ENCODE measurements at regions of chr16 and their contacts with region 1.

Region 1: DNA sequence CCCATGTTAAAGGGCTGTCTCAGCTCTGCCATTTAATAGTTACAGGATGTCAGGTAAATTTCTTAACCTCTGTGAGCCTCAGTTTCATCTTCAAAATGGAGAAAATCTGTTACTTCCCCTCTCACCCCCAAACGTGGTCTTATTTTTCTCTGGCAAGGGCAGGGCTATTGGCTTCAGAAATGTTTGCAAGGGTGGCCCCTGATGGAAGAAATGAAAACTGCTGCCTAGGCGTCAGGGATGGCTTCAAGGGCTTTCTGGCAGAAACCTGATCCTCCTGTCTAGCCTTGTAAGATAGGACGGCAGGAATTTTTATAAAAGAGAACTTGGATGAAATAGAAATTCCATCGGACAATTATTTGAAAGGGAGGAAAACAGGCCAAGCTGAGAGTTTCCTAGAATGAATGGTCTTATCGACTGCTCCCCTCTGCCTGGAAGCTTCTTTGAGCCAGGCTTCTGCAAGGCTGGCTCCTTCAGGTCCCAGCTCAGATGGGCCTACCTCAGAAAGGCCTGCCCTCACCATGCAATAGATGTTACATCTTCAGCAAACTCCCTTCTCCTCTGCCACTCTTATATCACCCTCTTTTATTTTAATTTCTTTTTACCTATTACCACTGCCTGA is 43.0 kb upstream of the TANGO6 start:
- DNase-seq: peak in 7 of 9 experiments; percentile 6 to 61 (median 41)
- ATAC-seq: peak; percentile 62
- H3K4me3 ChIP-seq: no peak overlapping the region
- H3K4me3 Mint-ChIP-seq: no peak overlapping the region
- H3K27ac ChIP-seq: no peak overlapping the region
- H3K27ac Mint-ChIP-seq: no peak overlapping the region
- H3K4me1 ChIP-seq: no peaks in the 10 kb centered on the region
- H3K4me1 Mint-ChIP-seq: no peaks in the 10 kb centered on the region
- H3K27me3 ChIP-seq: no peaks in the 10 kb centered on the region
- H3K27me3 Mint-ChIP-seq: no peaks in the 10 kb centered on the region
- CTCF ChIP-seq: peak; percentile 29

Region 2: GRCh38 chr16:68704232-68704867 is 96.0 kb before region 1 on chr16:
- CTCF ChIA-PET with region 1: no interaction called
- POLR2A ChIA-PET with region 1: interaction called, 3 read pairs
- intact Hi-C with region 1: loop called in 1 of 2 experiments (anchors 1 kb)
- DNase-seq: peak; percentile 5 to 68 (median 49)
- ATAC-seq: peak; percentile 49
- H3K4me3 ChIP-seq: no peak overlapping the region
- H3K4me3 Mint-ChIP-seq: no peak overlapping the region
- H3K27ac ChIP-seq: no peak overlapping the region
- H3K27ac Mint-ChIP-seq: no peak overlapping the region
- H3K4me1 ChIP-seq: no peaks in the 10 kb centered on the region
- H3K4me1 Mint-ChIP-seq: peaks cover 2% of the 10 kb centered on the region
- H3K27me3 ChIP-seq: no peaks in the 10 kb centered on the region
- H3K27me3 Mint-ChIP-seq: no peaks in the 10 kb centered on the region
- CTCF ChIP-seq: peak; percentile 53

Measured in CD8-positive, alpha-beta T cell (primary cell).